CD8-positive, alpha-beta T cell (primary cell): ENCODE measurements at regions of chr10 and their contacts with region 1.

Region 1: GRCh38 chr10:43204943-43205671 is 61.8 kb downstream of the RASGEF1A start:
- DNase-seq: peak in 8 of 9 experiments; percentile 33 to 77 (median 58)
- ATAC-seq: peak; percentile 55
- H3K4me3 ChIP-seq: no peak overlapping the region
- H3K4me3 Mint-ChIP-seq: no peak overlapping the region
- H3K27ac ChIP-seq: peak overlapping the region in 1 of 2 experiments; percentile 30
- H3K27ac Mint-ChIP-seq: no peak overlapping the region
- H3K4me1 ChIP-seq: peaks cover 3% of the 10 kb centered on the region
- H3K4me1 Mint-ChIP-seq: peaks cover 6% of the 10 kb centered on the region
- H3K27me3 ChIP-seq: no peaks in the 10 kb centered on the region
- H3K27me3 Mint-ChIP-seq: no peaks in the 10 kb centered on the region
- CTCF ChIP-seq: peak; percentile 70

Region 2: DNA sequence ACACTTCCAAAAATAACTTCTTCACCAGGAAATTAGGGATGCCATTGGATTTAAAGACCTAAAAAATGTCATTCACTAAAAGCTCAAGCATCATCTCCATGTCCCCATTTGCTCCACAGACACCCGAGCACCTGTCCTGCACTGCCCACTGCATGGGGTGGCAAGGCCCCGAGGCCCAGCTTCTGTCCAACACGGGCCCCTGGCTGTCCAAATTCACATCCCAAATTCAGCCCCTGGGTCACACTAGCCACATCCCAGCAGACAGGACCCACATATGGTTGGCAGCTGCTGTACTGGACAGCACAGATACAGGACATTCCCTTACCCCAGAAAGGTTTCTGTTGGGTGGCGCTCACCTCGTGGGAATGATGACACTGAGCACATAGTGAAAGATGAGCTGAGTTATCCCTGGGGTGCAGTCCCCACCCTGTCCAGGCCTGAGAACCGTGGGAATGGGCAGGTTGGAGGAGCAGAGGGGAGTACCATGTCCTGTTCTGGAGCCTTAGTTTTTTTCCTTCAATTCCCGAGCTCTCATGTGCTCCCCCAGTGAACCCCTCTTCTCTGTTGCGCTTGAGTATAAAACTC is 11.5 kb before region 1 on chr10:
- CTCF ChIA-PET with region 1: interaction called, 20 read pairs
- POLR2A ChIA-PET with region 1: interaction called, 4 read pairs
- intact Hi-C with region 1: no loop called
- DNase-seq: peak in 1 of 9 experiments; percentile 8
- ATAC-seq: no peak
- H3K4me3 ChIP-seq: no peak overlapping the region
- H3K4me3 Mint-ChIP-seq: no peak overlapping the region
- H3K27ac ChIP-seq: no peak overlapping the region
- H3K27ac Mint-ChIP-seq: no peak overlapping the region
- H3K4me1 ChIP-seq: no peaks in the 10 kb centered on the region
- H3K4me1 Mint-ChIP-seq: no peaks in the 10 kb centered on the region
- H3K27me3 ChIP-seq: no peaks in the 10 kb centered on the region
- H3K27me3 Mint-ChIP-seq: no peaks in the 10 kb centered on the region
- CTCF ChIP-seq: no peak

Region 3: GRCh38 chr10:43229208-43230061 is 24.3 kb after region 1 on chr10:
- CTCF ChIA-PET with region 1: interaction called, 5 read pairs
- POLR2A ChIA-PET with region 1: interaction called, 5 read pairs
- intact Hi-C with region 1: loop called in 1 of 2 experiments (anchors 1 kb)
- DNase-seq: peak in 8 of 9 experiments; percentile 33 to 81 (median 56)
- ATAC-seq: peak; percentile 55
- H3K4me3 ChIP-seq: peak overlapping the region; percentile 45 to 54
- H3K4me3 Mint-ChIP-seq: peak overlapping the region; percentile 86
- H3K27ac ChIP-seq: peak overlapping the region in 1 of 2 experiments; percentile 21
- H3K27ac Mint-ChIP-seq: peak overlapping the region; percentile 81
- H3K4me1 ChIP-seq: peaks cover 37% of the 10 kb centered on the region
- H3K4me1 Mint-ChIP-seq: peaks cover 49% of the 10 kb centered on the region
- H3K27me3 ChIP-seq: no peaks in the 10 kb centered on the region
- H3K27me3 Mint-ChIP-seq: peaks cover 13% of the 10 kb centered on the region
- CTCF ChIP-seq: no peak

Region 4: DNA sequence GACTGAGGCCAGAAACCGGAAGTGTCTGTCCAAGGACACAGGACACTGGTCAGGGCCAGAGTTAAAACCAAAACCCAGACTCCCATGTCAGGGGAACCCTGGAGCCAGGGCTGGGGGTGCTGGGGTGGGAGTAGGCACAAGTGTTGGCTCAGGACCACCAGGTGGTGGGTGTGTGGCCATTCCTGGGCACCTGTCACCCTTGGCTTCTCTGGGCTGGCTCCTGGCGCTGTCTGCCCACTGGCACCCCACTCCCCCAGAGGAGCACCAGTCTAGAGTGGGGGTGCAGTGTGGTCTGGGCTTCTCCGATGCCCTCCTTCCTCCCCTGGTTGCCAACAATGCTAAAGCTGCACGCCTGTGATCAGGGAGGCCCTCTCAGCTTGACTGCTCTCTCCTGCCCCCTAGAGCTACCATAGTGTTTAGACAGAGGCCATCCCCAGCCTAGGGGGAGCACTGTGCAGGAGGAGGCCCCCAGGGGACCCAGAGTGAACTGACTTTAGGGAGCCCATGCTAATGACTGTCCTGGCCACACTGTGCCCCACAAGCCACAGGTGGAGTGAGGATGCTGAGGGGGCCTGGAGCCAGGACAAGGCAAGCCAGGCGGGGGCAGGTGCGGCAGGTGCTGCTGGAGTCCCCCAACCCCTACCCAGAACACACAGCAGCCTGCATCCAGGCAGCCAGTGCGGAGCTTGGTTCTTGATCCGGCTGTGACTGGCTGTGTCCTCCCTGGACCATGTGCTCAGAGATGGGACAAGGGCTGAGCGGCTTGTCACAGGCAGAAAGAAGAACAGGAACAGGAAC is 50.7 kb after region 1 on chr10:
- CTCF ChIA-PET with region 1: interaction called, 20 read pairs
- POLR2A ChIA-PET with region 1: no interaction called
- intact Hi-C with region 1: loop called (anchors 1 to 5 kb)
- DNase-seq: peak in 6 of 9 experiments; percentile 46 to 78 (median 56)
- ATAC-seq: peak; percentile 84
- H3K4me3 ChIP-seq: no peak overlapping the region
- H3K4me3 Mint-ChIP-seq: no peak overlapping the region
- H3K27ac ChIP-seq: peak overlapping the region in 1 of 2 experiments; percentile 70
- H3K27ac Mint-ChIP-seq: no peak overlapping the region
- H3K4me1 ChIP-seq: peaks cover 12% of the 10 kb centered on the region
- H3K4me1 Mint-ChIP-seq: peaks cover 8% of the 10 kb centered on the region
- H3K27me3 ChIP-seq: no peaks in the 10 kb centered on the region
- H3K27me3 Mint-ChIP-seq: peaks cover 3% of the 10 kb centered on the region
- CTCF ChIP-seq: peak; percentile 33